Activated naive CD4-positive, alpha-beta T cell treated with anti-CD3 and anti-CD28 coated beads for 36 hours (primary cell): ENCODE measurements at regions of chr1 and their contacts with region 1.

Region 1: DNA sequence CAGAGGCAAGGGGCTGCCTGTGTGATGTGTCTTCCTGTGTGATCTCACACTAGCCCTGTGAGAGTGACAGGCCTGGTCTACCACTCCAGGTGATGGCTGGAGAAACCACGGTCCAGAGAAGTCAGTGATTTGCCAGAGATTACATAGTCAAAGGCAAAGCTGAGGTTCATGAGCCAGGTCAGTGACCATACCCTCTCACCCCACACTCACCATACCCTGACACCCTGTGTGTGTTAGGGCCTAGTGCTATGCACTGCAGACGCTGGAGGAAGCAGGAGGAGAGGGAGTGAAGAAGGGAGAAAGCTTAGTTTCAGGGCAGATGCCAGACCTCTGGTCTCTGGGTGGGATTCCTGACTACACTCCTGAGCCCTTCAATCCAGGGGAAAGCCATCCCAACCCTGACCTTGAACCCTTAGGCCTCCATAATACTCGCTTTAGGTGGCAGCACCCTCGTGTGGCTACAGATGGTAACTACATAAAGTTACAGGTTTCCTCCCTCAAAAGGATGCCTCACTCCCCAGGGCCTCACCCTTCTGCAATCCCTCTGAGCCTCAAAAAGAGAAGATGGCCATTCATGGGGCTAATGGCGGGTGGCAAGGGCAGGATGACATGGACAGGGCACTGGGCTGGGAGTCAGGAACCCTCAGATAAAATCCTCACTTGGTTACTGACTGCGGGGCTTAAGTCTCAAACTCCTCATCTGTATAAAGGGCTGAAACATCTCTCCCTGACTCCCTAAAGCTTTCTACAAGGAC is 20.8 kb upstream of the SDC3 start:
- DNase-seq: peak; percentile 74
- H3K4me3 Mint-ChIP-seq: no peak overlapping the region
- H3K27ac Mint-ChIP-seq: no peak overlapping the region
- H3K4me1 Mint-ChIP-seq: no peaks in the 10 kb centered on the region
- H3K27me3 Mint-ChIP-seq: no peaks in the 10 kb centered on the region

Region 2: DNA sequence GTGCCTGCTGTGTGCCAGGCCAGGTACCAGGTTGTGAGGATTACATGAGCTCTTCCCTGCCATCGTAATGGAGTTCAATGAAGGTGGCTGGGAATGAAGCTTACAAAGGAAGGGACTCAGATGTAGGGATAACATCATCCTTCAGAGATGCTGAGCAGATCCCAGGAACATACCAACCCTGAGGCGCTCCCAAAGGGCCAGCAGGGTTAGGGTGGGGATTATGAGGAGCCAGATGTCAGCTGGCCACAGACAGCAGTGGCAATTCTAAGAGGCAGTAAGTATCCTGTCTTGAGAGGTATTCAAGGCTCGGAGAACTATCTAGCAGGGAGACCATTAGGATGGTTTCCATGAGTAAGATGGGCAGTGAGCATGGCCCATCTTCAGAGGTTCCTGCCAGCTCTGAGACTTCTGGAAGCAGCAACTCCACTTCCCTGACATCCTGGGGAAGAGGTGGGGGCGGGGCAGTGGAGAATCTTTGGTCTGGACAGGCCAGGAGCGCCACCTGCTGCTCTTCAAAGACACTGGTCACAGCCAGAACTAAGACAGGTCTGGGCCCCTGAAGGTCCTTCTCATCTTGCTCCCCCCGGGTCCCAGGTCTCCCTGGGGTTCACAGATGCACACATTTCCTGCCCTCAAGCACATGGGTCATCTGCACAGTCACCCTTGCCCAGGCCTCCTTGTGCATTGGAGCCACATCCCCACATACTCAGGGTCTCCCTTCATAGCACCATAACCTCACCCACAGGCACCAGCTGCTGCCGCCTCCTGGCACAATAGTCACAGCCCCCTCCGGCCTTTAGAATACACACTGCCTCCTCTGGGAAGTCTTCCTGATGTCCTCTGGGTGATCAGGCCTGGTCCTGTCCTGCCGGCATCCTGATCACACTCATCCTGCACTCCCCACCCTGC is 18.0 kb before region 1 on chr1:
- CTCF ChIA-PET with region 1: interaction called, 16 read pairs
- intact Hi-C with region 1: no loop called
- DNase-seq: peak; percentile 76
- H3K4me3 Mint-ChIP-seq: no peak overlapping the region
- H3K27ac Mint-ChIP-seq: no peak overlapping the region
- H3K4me1 Mint-ChIP-seq: peaks cover 12% of the 10 kb centered on the region
- H3K27me3 Mint-ChIP-seq: peaks cover 29% of the 10 kb centered on the region

Region 3: DNA sequence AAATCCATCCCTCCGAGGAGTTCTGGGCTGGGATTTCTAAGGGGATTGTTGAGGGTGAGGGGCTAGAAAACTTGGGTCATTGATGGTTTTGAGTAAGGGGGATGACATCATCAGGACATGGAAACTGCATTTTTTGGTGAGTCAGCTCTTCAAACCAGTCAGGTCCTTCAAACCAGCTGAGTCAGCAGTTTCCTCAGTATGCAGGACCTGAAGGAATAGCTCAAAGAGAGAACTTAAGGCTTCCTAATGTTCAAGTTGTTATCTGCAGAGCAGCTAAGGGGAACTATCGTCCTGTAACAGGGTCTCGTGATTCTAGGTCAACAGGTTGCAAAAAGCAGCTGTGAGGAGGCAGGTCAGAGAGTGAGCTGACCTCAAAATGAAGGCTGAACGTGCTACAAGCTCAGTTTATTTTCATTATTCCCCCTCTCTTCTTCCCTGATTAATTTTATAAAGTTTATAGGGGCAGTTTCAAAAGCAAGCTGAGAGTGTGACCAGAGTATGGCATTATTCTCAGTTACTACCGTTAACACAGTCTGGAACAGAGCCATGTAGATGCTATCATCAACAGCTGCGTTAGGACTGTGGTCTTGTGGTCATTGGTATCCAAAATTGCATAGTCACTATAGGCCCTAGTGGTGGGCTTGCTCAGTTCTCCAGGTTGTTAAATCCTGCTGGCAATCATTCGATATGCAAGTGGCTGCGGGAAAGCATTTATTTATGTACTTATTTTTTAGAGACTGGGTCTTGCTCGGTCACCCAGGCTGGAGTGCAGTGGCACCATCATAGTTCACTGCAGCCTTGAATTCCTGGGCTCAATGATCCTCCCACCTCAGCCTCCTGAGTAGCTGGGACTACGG is 10.1 kb before region 1 on chr1:
- CTCF ChIA-PET with region 1: interaction called, 18 read pairs
- intact Hi-C with region 1: no loop called
- DNase-seq: no peak
- H3K4me3 Mint-ChIP-seq: no peak overlapping the region
- H3K27ac Mint-ChIP-seq: no peak overlapping the region
- H3K4me1 Mint-ChIP-seq: peaks cover 3% of the 10 kb centered on the region
- H3K27me3 Mint-ChIP-seq: peaks cover 4% of the 10 kb centered on the region

Region 4: DNA sequence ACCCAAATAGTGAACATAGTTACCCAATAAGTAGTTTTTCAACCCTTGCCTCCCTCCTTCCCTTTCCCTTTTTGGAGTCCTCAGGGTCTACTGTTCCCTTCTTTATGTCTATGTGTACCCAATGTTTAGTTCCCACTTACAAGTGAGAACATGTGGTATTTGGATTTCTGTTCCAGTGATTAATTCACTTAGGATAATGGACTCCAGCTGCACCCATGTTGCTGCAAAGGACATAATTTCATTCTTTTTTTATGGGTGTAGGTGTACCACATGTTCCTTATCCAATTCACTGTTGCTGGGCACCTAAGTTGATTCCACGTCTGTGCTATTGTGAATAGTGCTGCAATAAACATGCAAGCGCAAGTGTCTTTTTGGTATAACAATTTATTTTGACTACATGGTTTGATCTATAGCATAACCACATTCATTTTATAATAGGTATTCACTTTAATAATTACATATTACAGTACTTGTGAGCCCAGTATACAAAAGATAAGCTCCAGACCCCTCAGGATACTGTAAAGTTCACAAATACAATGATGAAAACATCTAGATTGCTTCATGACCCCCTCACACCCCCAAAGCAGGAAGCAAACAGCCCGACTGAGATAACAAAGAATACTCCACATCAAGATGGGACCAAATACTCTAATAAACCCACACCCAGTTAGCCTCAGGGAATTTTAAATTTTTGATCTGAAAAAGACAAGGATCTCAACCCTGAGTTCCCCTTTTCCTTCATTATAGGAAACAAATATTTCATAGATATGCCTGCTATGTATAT is 90.9 kb after region 1 on chr1:
- CTCF ChIA-PET with region 1: no interaction called
- intact Hi-C with region 1: no loop called
- DNase-seq: no peak
- H3K4me3 Mint-ChIP-seq: no peak overlapping the region
- H3K27ac Mint-ChIP-seq: peak overlapping the region; percentile 23
- H3K4me1 Mint-ChIP-seq: peaks cover 74% of the 10 kb centered on the region
- H3K27me3 Mint-ChIP-seq: no peaks in the 10 kb centered on the region